ENCODE measurements at regions of chr9 and their contacts with region 1.

Region 1: DNA sequence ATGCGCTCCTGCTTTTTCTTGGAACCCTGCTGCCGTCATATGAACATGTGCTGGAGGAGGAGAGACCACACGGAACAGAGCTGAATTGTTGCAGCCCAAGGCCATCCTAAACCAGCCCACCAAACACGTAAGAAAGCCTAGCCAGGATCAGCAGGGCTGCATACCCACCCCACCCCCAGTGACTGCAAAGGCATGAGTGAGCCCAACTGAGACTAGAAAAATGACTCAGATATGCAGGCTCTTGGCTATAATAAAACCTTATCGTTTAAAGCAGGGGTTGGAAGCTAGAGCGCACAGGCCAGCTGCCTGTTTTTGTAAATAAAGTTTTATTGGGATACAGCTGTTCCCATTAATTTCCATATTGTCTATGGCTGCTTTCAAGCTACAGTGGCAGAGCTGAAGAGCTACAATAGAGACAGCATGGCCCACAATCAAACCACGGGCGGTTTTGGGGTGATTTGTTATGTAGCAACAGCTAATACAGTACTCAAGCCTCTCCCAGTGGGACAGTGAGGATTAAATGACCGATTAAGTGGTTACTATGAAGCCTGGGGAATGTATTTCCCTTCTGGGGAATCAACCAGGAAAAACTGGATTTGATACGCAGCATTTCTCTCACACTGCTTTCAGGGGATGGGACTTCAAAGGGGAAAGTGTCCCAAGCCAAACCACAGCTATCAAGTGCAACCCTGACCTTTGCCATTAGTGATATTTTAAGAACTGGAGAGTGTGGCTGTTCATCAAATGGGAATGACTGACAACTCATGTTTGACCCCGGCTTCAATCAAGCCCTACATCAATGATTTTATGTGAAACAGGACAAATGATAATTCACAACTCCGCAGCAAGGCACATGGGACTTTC is 6.3 kb downstream of the SHB start:
- DNase-seq: no peak
- H3K4me3 ChIP-seq: no peak overlapping the region
- H3K27me3 ChIP-seq: no peaks in the 10 kb centered on the region
- CTCF ChIP-seq: no peak

Region 2: GRCh38 chr9:38017149-38017884 is 45.4 kb before region 1 on chr9:
- CTCF ChIA-PET with region 1: interaction called, 6 read pairs
- POLR2A ChIA-PET with region 1: interaction called, 11 read pairs
- DNase-seq: no peak
- H3K4me3 ChIP-seq: no peak overlapping the region
- H3K27me3 ChIP-seq: no peaks in the 10 kb centered on the region
- CTCF ChIP-seq: peak; percentile 23; the same call in 1 of the 2 replicates

Measured in BJ (cell line).